Activated naive CD8-positive, alpha-beta T cell treated with anti-CD3 and anti-CD28 coated beads, Interleukin-2, amount 10 ng/mL, durations not matched to agents 7 days and 5 days (primary cell): ENCODE measurements at regions of chr14 and their contacts with region 1.

Region 1: GRCh38 chr14:105490572-105491366 is at the start of gene TEDC1:
- DNase-seq: peak; percentile 98
- ATAC-seq: peak; percentile 78
- H3K4me3 Mint-ChIP-seq: peak within 1 kb of the TSS; percentile 87
- H3K27ac Mint-ChIP-seq: peak within 1 kb of the TSS; percentile 93
- H3K4me1 Mint-ChIP-seq: peaks cover 15% of the 10 kb centered on the region
- H3K27me3 Mint-ChIP-seq: no peaks in the 10 kb centered on the region
- total RNA-seq, gene TEDC1: 43.3 to 47.6 TPM

Region 2: DNA sequence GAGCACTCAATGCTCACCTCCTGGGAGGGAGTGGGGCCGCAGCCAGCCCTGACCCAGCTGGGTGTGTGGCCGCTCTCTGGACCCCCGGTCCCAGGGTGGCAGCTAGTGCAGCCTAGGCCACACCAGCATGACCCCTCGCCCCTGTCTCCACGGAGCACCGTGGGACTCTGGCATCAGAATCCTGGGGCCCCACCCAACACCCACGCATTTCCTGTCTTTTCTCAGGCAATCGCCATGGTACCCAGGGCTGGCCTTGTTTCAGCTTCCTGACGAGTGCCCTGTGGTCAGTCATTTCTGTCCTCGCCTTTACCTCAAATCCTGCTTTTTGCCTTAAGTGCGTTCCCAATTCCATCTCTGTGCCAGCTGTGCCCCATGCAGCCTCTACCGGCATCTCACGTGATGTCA is 160.3 kb before region 1 on chr14:
- POLR2A ChIA-PET with region 1: no interaction called
- DNase-seq: no peak
- ATAC-seq: no peak
- H3K4me3 Mint-ChIP-seq: no peak overlapping the region
- H3K27ac Mint-ChIP-seq: no peak overlapping the region
- H3K4me1 Mint-ChIP-seq: peaks cover 15% of the 10 kb centered on the region
- H3K27me3 Mint-ChIP-seq: no peaks in the 10 kb centered on the region

Region 3: DNA sequence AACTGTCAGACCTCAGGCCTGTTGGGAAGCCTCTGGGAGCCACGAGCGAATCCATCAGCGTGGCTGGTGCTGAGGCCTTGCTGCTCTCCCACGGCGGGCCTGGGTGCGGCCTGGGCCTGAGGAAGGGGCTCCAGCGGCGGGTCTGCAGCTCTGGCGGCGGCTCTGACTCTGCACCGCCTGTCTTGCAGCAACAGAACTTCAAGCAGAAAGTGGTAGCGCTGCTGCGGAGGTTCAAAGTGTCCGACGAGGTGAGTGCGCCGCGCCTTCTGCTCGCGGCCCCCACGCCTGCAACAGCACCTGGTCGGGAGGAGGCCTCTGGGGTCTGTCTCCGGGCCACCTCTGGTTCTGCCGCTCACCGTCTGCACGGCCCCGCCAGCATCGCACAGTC is 121.1 kb before region 1 on chr14:
- POLR2A ChIA-PET with region 1: interaction called, 22 read pairs
- DNase-seq: no peak
- ATAC-seq: no peak
- H3K4me3 Mint-ChIP-seq: no peak overlapping the region
- H3K27ac Mint-ChIP-seq: no peak overlapping the region
- H3K4me1 Mint-ChIP-seq: peaks cover 3% of the 10 kb centered on the region
- H3K27me3 Mint-ChIP-seq: no peaks in the 10 kb centered on the region

Region 4: GRCh38 chr14:105398044-105398725 is 92.6 kb before region 1 on chr14 and contains the start of gene TEX22:
- POLR2A ChIA-PET with region 1: interaction called, 10 read pairs
- DNase-seq: peak; percentile 98
- ATAC-seq: peak; percentile 83
- H3K4me3 Mint-ChIP-seq: peak within 1 kb of the TSS; percentile 93
- H3K27ac Mint-ChIP-seq: peak within 1 kb of the TSS; percentile 92
- H3K4me1 Mint-ChIP-seq: peaks cover 17% of the 10 kb centered on the region
- H3K27me3 Mint-ChIP-seq: no peaks in the 10 kb centered on the region
- total RNA-seq, gene TEX22: 6.4 to 6.9 TPM

Region 5: GRCh38 chr14:105527661-105528581 is 37.2 kb after region 1 on chr14:
- POLR2A ChIA-PET with region 1: interaction called, 16 read pairs
- DNase-seq: peak; percentile 92
- ATAC-seq: peak; percentile 62
- H3K4me3 Mint-ChIP-seq: peak overlapping the region; percentile 78
- H3K27ac Mint-ChIP-seq: peak overlapping the region; percentile 76
- H3K4me1 Mint-ChIP-seq: peaks cover 17% of the 10 kb centered on the region
- H3K27me3 Mint-ChIP-seq: peaks cover 30% of the 10 kb centered on the region

Region 6: GRCh38 chr14:105602799-105603793 is 112.3 kb after region 1 on chr14:
- POLR2A ChIA-PET with region 1: no interaction called
- DNase-seq: no peak
- ATAC-seq: no peak
- H3K4me3 Mint-ChIP-seq: no peak overlapping the region
- H3K27ac Mint-ChIP-seq: no peak overlapping the region
- H3K4me1 Mint-ChIP-seq: no peaks in the 10 kb centered on the region
- H3K27me3 Mint-ChIP-seq: no peaks in the 10 kb centered on the region